ENCODE measurements at regions of chr1 and their contacts with region 1.

Region 1: DNA sequence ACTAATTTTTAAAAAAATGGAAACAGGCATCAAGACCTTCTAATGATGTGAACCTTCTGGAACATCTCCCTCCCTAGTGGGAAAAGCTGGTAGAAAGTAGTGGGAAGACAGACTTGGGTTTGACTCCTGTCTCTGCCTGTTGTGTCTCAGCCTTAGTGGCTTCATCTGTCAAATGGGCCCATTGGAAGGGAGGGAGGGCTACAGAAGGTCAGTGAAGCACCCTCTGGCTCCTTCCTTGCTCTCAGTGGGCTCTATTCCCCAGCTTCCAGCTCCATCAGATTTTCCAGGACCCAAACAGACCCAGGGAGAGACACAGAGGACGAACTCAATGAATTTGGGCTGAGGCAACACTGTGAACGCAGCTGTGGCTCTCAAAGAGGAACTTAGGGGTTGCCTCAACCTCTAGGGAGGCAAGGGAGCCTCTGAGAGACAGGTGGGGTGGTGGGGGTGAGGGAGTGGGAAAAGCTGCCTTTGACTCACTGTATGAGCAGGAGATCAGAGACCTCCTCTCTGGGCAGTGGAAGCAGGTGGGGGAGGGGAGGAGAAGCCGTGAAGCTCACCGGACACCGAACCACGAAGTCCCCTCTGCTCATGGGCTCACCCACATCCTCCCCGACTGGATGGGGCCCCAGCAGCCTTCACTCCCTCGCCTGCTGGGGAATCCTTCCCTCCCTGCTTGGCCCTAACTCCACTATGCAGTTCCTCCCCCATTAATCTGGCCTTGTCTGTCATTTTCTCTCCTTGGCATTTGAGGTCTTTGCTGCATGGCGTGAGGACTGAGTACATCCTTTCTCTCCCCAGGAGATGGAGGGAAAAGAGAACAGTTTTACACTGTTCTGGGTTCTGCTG is 4.4 kb downstream of the CNR2 start:
- DNase-seq: peak; percentile 15
- H3K4me3 Mint-ChIP-seq: no peak overlapping the region
- H3K27ac Mint-ChIP-seq: peak overlapping the region; percentile 54
- H3K4me1 Mint-ChIP-seq: peaks cover 56% of the 10 kb centered on the region
- H3K27me3 Mint-ChIP-seq: peaks cover 21% of the 10 kb centered on the region

Region 2: GRCh38 chr1:23862640-23863039 is 46.1 kb before region 1 on chr1:
- CTCF ChIA-PET with region 1: no interaction called
- POLR2A ChIA-PET with region 1: no interaction called
- DNase-seq: no peak
- H3K4me3 Mint-ChIP-seq: no peak overlapping the region
- H3K27ac Mint-ChIP-seq: no peak overlapping the region
- H3K4me1 Mint-ChIP-seq: peaks cover 21% of the 10 kb centered on the region
- H3K27me3 Mint-ChIP-seq: no peaks in the 10 kb centered on the region

Region 3: GRCh38 chr1:23897083-23897482 is 11.6 kb before region 1 on chr1:
- CTCF ChIA-PET with region 1: interaction called, 16 read pairs
- POLR2A ChIA-PET with region 1: no interaction called
- DNase-seq: no peak
- H3K4me3 Mint-ChIP-seq: no peak overlapping the region
- H3K27ac Mint-ChIP-seq: no peak overlapping the region
- H3K4me1 Mint-ChIP-seq: peaks cover 15% of the 10 kb centered on the region
- H3K27me3 Mint-ChIP-seq: peaks cover 35% of the 10 kb centered on the region